Panc1 (cell line): ENCODE measurements at regions of chr18 and their contacts with region 1.

Region 1: GRCh38 chr18:23586249-23587196 is at the start of gene NPC1:
- DNase-seq: peak; percentile 67
- ATAC-seq: peak; percentile 98
- H3K4me3 ChIP-seq: peak within 1 kb of the TSS; percentile 91 to 97
- H3K27ac ChIP-seq: peak within 1 kb of the TSS; percentile 85
- H3K4me1 ChIP-seq: peaks cover 12% of the 10 kb centered on the region
- H3K27me3 ChIP-seq: no peaks in the 10 kb centered on the region
- CTCF ChIP-seq: peak; percentile 98
- total RNA-seq, gene NPC1: 92.7 TPM

Region 2: GRCh38 chr18:23503038-23503962 is 83.2 kb before region 1 on chr18 and contains the start of gene RMC1:
- CTCF ChIA-PET with region 1: no interaction called
- POLR2A ChIA-PET with region 1: no interaction called
- in situ Hi-C with region 1: no loop called
- intact Hi-C with region 1: loop called (anchors 10 kb)
- DNase-seq: no peak
- ATAC-seq: peak; percentile 94
- H3K4me3 ChIP-seq: peak within 1 kb of the TSS; percentile 81 to 90
- H3K27ac ChIP-seq: peak within 1 kb of the TSS; percentile 92
- H3K4me1 ChIP-seq: peaks cover 15% of the 10 kb centered on the region
- H3K27me3 ChIP-seq: no peaks in the 10 kb centered on the region
- CTCF ChIP-seq: peak; percentile 50; the same call in 1 of the 2 replicates
- total RNA-seq, gene RMC1: 57.4 TPM

Region 3: GRCh38 chr18:23552505-23552904 is 34.0 kb before region 1 on chr18:
- CTCF ChIA-PET with region 1: no interaction called
- POLR2A ChIA-PET with region 1: interaction called, 10 read pairs
- in situ Hi-C with region 1: no loop called
- intact Hi-C with region 1: no loop called
- DNase-seq: no peak
- ATAC-seq: no peak
- H3K4me3 ChIP-seq: no peak overlapping the region
- H3K27ac ChIP-seq: no peak overlapping the region
- H3K4me1 ChIP-seq: no peaks in the 10 kb centered on the region
- H3K27me3 ChIP-seq: no peaks in the 10 kb centered on the region
- CTCF ChIP-seq: no peak

Region 4: GRCh38 chr18:23703057-23703986 is 116.8 kb after region 1 on chr18:
- CTCF ChIA-PET with region 1: no interaction called
- POLR2A ChIA-PET with region 1: no interaction called
- in situ Hi-C with region 1: no loop called
- intact Hi-C with region 1: no loop called
- DNase-seq: peak; percentile 50
- ATAC-seq: peak; percentile 95
- H3K4me3 ChIP-seq: no peak overlapping the region
- H3K27ac ChIP-seq: no peak overlapping the region
- H3K4me1 ChIP-seq: no peaks in the 10 kb centered on the region
- H3K27me3 ChIP-seq: no peaks in the 10 kb centered on the region; the same call in 1 of the 2 replicates
- CTCF ChIP-seq: peak; percentile 76

Region 5: GRCh38 chr18:23735021-23735464 is 148.5 kb after region 1 on chr18:
- CTCF ChIA-PET with region 1: no interaction called
- POLR2A ChIA-PET with region 1: no interaction called
- in situ Hi-C with region 1: no loop called
- intact Hi-C with region 1: no loop called
- DNase-seq: no peak
- ATAC-seq: no peak
- H3K4me3 ChIP-seq: no peak overlapping the region
- H3K27ac ChIP-seq: no peak overlapping the region
- H3K4me1 ChIP-seq: no peaks in the 10 kb centered on the region
- H3K27me3 ChIP-seq: no peaks in the 10 kb centered on the region
- CTCF ChIP-seq: no peak